ENCODE measurements at regions of chr11 and their contacts with region 1.

Region 1: DNA sequence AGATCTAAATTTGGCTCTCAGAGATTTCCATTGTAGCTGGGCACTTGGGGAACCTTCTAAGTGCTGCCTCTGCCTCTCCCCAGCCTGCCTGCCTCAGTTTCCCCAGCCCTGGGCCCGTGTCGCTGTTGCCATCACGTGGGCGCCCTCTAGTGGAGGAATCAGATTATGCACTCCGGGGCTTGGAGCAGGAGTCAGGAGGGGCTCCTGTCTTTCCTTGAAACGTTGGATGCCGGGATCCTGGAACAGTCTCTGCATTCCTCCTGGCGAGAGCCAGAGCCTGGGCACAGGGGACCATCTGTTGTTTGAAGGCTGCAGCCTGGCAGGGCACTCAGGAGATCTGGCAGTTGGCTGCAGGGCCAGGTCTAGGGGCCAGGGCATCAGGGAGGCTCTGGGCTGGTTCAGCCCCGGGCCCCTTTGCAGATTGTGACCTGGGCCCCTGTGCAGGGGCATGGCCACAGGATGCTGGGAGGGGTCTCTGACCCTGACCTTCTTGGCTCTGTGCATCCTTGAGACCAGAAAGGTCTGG is 71.6 kb downstream of the LRP5 start:
- DNase-seq: peak; percentile 75
- H3K4me3 ChIP-seq: no peak overlapping the region
- H3K27ac ChIP-seq: peak overlapping the region in 3 of 4 donors; percentile 83 to 89 (median 87)
- H3K4me1 ChIP-seq: peaks cover 29 to 42% (median 39%) of the 10 kb centered on the region in 4 donors
- H3K27me3 ChIP-seq: no peaks in the 10 kb centered on the region
- CTCF ChIP-seq: peak; percentile 92 to 96 (median 96)
- EP300 ChIP-seq: no peak
- POLR2A ChIP-seq: no peak

Region 2: DNA sequence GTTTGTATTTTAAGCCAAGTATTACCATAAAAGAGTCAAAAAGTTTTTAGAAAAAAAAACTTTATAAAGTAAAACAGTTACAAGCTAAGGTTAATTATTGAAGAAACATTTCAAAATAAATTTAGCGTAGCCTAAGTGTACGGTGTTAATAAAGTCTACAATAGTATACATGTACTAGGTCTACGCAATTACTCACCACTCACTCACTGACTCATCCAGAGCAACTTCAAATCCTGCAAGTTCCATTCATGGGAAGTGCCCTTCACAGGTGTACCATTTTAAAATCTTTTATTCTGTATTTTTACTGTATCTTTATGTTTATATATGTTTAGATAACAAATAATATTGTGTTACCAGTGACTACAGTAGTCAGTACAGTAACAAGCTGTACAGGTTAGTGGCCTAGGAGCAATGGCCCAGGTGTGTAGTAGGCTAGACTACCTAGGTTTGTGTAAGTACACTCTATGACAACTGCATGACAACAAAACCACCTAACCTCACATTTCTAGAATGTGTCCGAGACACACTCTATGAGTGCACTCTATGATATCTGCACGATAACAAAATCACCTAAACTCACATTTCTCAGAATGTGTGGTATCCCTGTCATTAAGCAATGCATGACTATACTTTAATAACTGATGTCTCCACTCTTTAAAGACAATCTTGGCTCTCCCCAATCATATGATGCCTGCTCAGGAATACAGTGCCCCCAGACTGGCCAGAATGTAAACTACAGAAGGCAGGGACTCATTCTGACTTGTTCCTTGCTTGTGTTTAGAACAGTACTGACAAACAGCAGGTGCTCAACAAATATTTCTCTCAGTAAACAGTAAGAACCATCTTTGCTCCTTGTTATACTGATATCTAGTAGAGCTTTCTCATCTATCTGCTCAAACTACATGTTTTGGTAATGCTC is 192.1 kb before region 1 on chr11:
- in situ Hi-C with region 1: no loop called
- intact Hi-C with region 1: no loop called
- DNase-seq: no peak
- H3K4me3 ChIP-seq: no peak overlapping the region
- H3K27ac ChIP-seq: no peak overlapping the region
- H3K4me1 ChIP-seq: peaks cover 0 to 39% (median 18%) of the 10 kb centered on the region in 4 donors
- H3K27me3 ChIP-seq: no peaks in the 10 kb centered on the region
- CTCF ChIP-seq: no peak
- EP300 ChIP-seq: no peak
- POLR2A ChIP-seq: no peak

Region 3: DNA sequence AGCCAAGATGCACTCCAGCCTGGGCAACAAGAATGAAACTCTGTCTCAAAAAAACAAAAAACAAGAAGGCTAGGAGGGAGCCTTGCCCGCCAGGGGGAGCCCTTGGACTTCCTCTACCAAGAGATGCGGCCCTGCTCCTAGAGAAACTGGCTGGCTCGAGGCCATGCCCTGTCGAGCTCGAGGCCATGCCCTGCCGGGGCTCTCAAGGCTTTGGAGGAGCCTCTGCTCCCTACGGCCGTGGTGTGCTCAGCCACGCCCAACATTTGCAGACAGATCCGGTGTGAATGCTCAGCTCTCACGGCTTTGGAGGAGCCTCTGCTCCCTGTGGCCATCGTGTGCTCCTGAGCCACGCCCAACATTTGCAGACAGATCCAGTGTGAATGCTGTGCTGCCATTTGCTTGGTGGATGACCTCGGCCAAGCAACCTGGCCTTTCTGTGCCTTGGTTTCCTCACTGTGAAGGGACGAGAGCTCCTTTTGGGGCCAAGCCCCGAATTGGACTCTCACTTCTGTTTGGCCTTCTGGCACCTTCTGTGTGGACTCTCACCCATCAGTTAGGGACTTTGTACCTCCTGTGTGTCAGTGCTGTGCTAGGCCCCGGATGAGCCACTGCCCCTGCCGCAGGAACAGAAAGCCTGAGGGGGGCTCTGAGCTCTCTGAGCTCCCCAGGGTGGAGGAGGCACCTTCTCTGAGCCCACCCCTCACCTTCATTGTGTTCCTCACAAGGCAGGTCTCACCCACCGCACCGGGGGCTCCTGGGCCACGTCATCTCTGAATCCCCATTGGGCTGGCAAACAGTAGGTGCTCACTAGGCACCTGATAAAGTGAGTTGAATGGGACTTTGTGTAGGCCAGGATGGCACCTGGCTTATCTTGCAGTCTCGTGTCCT is 126.3 kb before region 1 on chr11:
- in situ Hi-C with region 1: loop called in 2 of 4 experiments (anchors 5 to 25 kb)
- intact Hi-C with region 1: loop called (anchors 10 kb)
- DNase-seq: peak; percentile 97
- H3K4me3 ChIP-seq: peak overlapping the region in 1 of 4 donors; percentile 13
- H3K27ac ChIP-seq: peak overlapping the region in 2 of 4 donors; percentile 10 to 52
- H3K4me1 ChIP-seq: peaks cover 7 to 8% (median 8%) of the 10 kb centered on the region in 4 donors
- H3K27me3 ChIP-seq: no peaks in the 10 kb centered on the region
- CTCF ChIP-seq: peak; percentile 88 to 98 (median 91)
- EP300 ChIP-seq: no peak
- POLR2A ChIP-seq: no peak

Region 4: GRCh38 chr11:68271781-68272608 is 112.0 kb before region 1 on chr11 and contains the start of gene C11orf24:
- in situ Hi-C with region 1: loop called in 1 of 4 experiments (anchors 25 kb)
- intact Hi-C with region 1: no loop called
- DNase-seq: peak; percentile 96
- H3K4me3 ChIP-seq: peak within 1 kb of the TSS; percentile 56 to 80 (median 70)
- H3K27ac ChIP-seq: peak within 1 kb of the TSS; percentile 95 to 98 (median 98)
- H3K4me1 ChIP-seq: peaks cover 10 to 36% (median 24%) of the 10 kb centered on the region in 4 donors
- H3K27me3 ChIP-seq: no peaks in the 10 kb centered on the region
- CTCF ChIP-seq: peak in 2 of 5 experiments; percentile 37 to 40
- EP300 ChIP-seq: peak; percentile 3
- POLR2A ChIP-seq: peak; percentile 92
- total RNA-seq, gene C11orf24: 31.4 to 130 (median 56.6) TPM

Region 5: DNA sequence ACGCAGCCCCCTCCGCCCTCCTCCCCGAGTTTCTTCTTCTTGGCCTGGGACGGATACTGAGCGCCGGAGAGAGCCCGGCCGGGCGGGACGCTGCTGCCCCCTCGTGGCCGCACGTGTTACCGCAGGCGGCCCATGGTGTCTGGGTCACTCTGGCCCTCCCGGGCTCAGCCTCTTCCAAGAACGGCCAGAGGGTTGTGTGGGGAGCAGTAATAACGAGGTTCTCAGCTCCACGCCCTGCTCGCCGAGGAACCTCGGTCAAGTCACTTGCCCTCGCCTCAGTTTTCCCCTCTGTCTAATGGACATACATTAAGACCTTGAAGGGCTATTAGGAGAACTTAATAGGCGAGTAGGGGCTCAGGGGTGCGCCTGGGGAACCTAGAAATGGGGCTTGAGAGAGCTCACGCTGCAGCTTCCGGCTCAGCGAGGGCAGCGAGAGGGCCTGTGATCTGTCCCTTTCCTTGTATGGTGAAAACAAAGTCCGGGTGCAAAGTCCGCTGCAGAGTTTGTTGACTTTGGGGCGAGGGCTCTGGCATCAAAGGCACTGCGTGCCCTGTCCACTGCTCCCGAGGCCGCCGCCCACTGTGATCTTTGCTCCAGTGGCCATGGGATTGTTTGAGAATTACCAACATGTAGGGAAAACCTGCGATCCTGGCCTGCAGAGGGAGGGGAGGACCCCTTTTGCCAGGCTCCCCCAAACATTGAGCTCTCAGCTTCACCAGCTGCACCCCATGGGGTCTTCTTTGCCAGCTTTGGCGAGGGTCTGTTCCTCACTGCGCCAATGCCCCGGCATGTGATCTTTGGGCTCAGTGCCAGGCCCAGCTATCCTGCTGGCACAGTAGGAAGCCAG is 86.0 kb before region 1 on chr11:
- in situ Hi-C with region 1: loop called in 1 of 4 experiments (anchors 10 kb)
- intact Hi-C with region 1: no loop called
- DNase-seq: peak; percentile 91
- H3K4me3 ChIP-seq: peak overlapping the region in 1 of 4 donors; percentile 13
- H3K27ac ChIP-seq: peak overlapping the region; percentile 74 to 86 (median 83)
- H3K4me1 ChIP-seq: peaks cover 9 to 40% (median 35%) of the 10 kb centered on the region in 4 donors
- H3K27me3 ChIP-seq: no peaks in the 10 kb centered on the region
- CTCF ChIP-seq: peak; percentile 98 to 99 (median 99)
- EP300 ChIP-seq: peak; percentile 63
- POLR2A ChIP-seq: peak; percentile 34

Region 6: GRCh38 chr11:68312117-68312779 is 71.8 kb before region 1 on chr11 and contains the start of gene LRP5:
- in situ Hi-C with region 1: loop called in 1 of 4 experiments (anchors 10 kb)
- intact Hi-C with region 1: loop called (anchors 5 kb)
- DNase-seq: peak; percentile 59
- H3K4me3 ChIP-seq: peak within 1 kb of the TSS; percentile 63 to 94 (median 88)
- H3K27ac ChIP-seq: peak within 1 kb of the TSS; percentile 83 to 92 (median 89)
- H3K4me1 ChIP-seq: peaks cover 20 to 39% (median 38%) of the 10 kb centered on the region in 4 donors
- H3K27me3 ChIP-seq: no peaks in the 10 kb centered on the region
- CTCF ChIP-seq: no peak
- EP300 ChIP-seq: no peak
- POLR2A ChIP-seq: no peak
- total RNA-seq, gene LRP5: 72.6 to 138 (median 82.3) TPM

Region 7: GRCh38 chr11:68412593-68413475 is 28.8 kb after region 1 on chr11:
- in situ Hi-C with region 1: no loop called
- intact Hi-C with region 1: no loop called
- DNase-seq: no peak
- H3K4me3 ChIP-seq: no peak overlapping the region
- H3K27ac ChIP-seq: peak overlapping the region; percentile 17 to 72 (median 68)
- H3K4me1 ChIP-seq: peaks cover 0 to 13% (median 12%) of the 10 kb centered on the region in 4 donors
- H3K27me3 ChIP-seq: no peaks in the 10 kb centered on the region
- CTCF ChIP-seq: no peak
- EP300 ChIP-seq: no peak
- POLR2A ChIP-seq: no peak

Region 8: GRCh38 chr11:68447015-68447801 is 63.2 kb after region 1 on chr11:
- in situ Hi-C with region 1: no loop called
- intact Hi-C with region 1: loop called (anchors 10 kb)
- DNase-seq: peak; percentile 83
- H3K4me3 ChIP-seq: no peak overlapping the region
- H3K27ac ChIP-seq: no peak overlapping the region
- H3K4me1 ChIP-seq: peaks cover 0 to 6% (median 1%) of the 10 kb centered on the region in 4 donors
- H3K27me3 ChIP-seq: no peaks in the 10 kb centered on the region
- CTCF ChIP-seq: peak; percentile 94 to 97 (median 95)
- EP300 ChIP-seq: no peak
- POLR2A ChIP-seq: no peak

Measured in transverse colon (tissue), 4 donors.